Breast epithelium (tissue), 4 donors: ENCODE measurements at regions of chr7 and their contacts with region 1.

Region 1: DNA sequence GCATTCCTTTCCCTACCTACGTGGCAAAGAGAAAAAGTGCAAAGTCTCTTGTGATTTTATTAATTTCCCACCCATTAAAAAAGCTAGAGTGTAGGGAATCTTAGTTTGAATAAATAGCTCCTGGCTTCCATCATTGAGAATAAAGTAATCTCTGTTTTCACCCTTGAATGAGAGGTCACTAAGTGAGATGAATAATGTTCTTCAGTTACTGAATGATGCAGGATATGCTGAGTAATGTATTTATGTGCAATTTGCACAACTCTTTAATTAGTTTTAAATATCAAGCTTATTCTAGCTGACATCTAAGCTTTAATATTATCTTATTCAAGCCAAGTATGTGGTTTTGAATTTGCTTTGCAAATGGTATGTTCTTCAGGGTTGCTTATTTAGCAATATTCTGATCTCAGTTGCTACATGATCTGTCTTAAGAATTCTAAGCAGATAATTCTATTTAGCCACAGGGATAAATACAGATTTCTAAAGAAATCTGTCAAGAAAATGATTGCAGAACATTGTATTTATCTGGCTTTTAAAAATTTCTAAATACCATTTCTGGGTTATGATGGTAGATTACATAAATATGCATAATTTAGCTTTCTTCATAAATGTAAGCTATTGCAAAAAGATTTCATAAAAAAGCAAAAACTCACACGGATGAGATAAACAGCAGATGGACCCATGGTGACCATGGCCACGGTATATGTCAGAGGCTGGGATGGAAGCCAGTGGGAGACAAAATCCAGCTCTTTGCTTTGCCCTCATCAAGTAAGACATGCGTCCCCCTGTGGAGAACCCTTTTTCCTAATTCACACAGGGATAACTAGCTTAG is 141.0 kb downstream of the MACC1 start:
- DNase-seq: no peak
- H3K4me3 ChIP-seq: no peak overlapping the region
- H3K27ac ChIP-seq: no peak overlapping the region
- H3K4me1 ChIP-seq: no peaks in the 10 kb centered on the region
- H3K27me3 ChIP-seq: no peaks in the 10 kb centered on the region
- CTCF ChIP-seq: no peak
- POLR2A ChIP-seq: no peak

Region 2: DNA sequence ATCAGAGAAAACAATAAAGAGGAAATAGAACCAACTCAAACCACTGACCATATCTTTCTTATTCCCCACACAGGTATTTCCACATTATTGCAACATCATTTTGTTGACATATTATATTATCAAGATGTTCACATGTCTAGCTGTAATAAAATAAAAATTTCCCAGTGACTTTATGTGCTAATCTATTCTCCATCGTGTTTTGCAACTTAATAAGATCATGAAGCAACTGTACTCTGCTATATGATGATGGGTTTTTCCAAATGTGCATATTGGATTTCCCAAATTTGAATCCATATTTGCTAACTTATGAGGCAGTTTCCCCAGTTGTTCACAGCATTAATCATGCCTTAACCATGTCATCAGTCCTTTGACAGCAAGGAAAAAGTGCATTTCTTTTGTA is 382.3 kb after region 1 on chr7:
- intact Hi-C with region 1: loop called (anchors 5 kb)
- DNase-seq: no peak
- H3K4me3 ChIP-seq: no peak overlapping the region
- H3K27ac ChIP-seq: no peak overlapping the region
- H3K4me1 ChIP-seq: no peaks in the 10 kb centered on the region
- H3K27me3 ChIP-seq: no peaks in the 10 kb centered on the region
- CTCF ChIP-seq: no peak
- POLR2A ChIP-seq: no peak

Region 3: DNA sequence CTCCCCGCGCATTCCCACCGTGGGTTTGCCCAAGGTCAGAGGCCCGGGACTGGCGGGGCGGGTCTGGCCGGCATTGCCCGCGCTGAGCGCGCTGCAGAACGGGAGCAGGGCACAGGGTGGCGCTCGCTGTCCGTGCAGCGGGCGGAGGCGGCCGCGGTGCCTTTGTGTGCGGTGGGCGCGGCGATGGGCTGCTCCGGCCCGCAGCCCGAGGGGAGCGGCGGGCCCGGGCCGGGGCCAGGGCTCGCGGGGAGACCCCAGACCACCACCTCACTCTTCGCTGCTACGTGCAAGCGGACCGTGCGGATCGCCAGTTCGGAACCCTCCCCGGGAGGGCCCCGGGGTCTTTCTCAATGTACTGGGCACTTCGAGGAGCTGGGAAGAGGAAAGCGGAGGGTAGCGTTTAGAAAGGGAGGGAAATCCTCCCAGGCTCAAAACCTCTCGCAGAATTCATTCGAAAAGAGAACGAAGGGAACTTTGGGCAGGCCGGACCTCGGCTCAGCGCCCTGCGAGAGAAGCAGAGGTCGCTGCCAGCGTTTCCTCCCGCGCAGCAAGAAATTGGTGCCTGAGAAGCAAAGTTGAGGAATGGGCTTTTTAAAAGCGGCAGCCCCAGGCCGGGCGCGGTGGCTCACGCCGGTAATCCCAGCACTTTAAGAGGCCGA is 702.0 kb after region 1 on chr7:
- intact Hi-C with region 1: no loop called
- DNase-seq: no peak
- H3K4me3 ChIP-seq: peak overlapping the region in 2 of 3 donors; percentile 24 to 58
- H3K27ac ChIP-seq: no peak overlapping the region
- H3K4me1 ChIP-seq: no peaks in the 10 kb centered on the region
- H3K27me3 ChIP-seq: peaks cover 5 to 98% of the 10 kb centered on the region in 2 donors
- CTCF ChIP-seq: peak in 2 of 3 donors; percentile 18 to 67
- POLR2A ChIP-seq: no peak